GM13976 (cell line): ENCODE measurements at regions of chr21 and their contacts with region 1.

Region 1: DNA sequence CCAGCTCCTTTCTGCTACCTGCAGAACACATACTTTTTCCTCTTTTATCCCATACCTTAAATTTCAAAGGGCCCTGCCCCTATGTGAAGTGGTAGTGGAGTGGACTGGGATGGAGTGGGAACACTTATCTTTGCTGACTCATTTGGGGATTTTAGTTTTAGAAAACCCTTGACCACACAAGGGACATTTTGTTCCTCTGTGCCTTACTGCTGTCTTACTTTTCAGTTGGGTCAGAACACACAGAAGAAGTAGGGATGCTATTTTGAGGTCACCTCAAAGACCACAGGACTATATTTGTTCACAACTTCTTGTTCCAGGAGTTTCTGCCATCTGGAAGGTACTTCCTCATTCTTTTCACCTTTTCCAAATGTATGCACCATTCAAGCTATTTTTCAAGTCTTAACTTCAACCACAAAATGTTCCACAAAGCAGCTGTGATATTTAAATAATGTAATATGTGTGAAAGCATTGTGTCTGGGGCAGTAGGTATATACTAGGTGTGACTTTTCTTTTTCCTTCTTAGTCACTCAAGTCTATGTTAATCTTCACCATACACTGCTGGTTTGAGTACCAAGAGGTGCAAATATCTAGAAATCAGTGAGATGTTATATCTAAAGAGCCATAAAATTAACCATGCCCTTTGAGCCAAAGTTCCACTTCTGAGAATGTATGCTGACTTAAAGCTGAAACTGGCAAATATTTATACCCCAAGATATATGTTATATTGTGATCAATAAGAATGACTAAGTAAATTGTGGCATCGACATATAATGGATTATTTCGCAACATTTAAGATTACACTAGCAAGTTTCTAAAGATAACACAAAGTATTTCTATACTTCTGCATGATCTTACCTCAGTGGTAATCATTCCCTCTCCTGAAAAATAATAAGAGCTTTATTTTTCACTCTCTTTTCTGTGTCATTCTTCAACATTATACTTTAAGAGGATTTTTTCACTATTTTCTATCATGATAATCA is 308.5 kb downstream of the MRPL39 start:
- DNase-seq: no peak
- CTCF ChIP-seq: no peak

Region 2: GRCh38 chr21:25188677-25189079 is 110.1 kb before region 1 on chr21:
- in situ Hi-C with region 1: loop called (anchors 10 kb)
- DNase-seq: peak; percentile 15
- CTCF ChIP-seq: no peak